ENCODE measurements at regions of chr20 and their contacts with region 1.

Region 1: GRCh38 chr20:52972190-52972937 is at the start of gene TSHZ2:
- DNase-seq: peak; percentile 81
- H3K4me3 ChIP-seq: peak within 1 kb of the TSS; percentile 82 to 92 (median 85)
- H3K27ac ChIP-seq: peak within 1 kb of the TSS; percentile 83
- H3K4me1 ChIP-seq: peaks cover 17% of the 10 kb centered on the region
- H3K27me3 ChIP-seq: no peaks in the 10 kb centered on the region
- CTCF ChIP-seq: no peak
- total RNA-seq, gene TSHZ2: 10.0 to 11.5 TPM

Region 2: GRCh38 chr20:52783769-52784168 is 188.6 kb before region 1 on chr20:
- CTCF ChIA-PET with region 1: no interaction called
- dilution Hi-C with region 1: no loop called
- in situ Hi-C with region 1: no loop called
- intact Hi-C with region 1: loop called (anchors 2 kb)
- DNase-seq: peak; percentile 15
- H3K4me3 ChIP-seq: no peak overlapping the region
- H3K27ac ChIP-seq: no peak overlapping the region
- H3K4me1 ChIP-seq: no peaks in the 10 kb centered on the region
- H3K27me3 ChIP-seq: peaks cover 2% of the 10 kb centered on the region
- CTCF ChIP-seq: peak; percentile 37 to 55

Region 3: GRCh38 chr20:52889225-52889624 is 83.1 kb before region 1 on chr20:
- CTCF ChIA-PET with region 1: no interaction called
- dilution Hi-C with region 1: loop called (anchors 25 kb)
- in situ Hi-C with region 1: no loop called
- intact Hi-C with region 1: loop called (anchors 2 kb)
- DNase-seq: peak; percentile 89
- H3K4me3 ChIP-seq: no peak overlapping the region
- H3K27ac ChIP-seq: peak overlapping the region; percentile 11
- H3K4me1 ChIP-seq: peaks cover 15% of the 10 kb centered on the region
- H3K27me3 ChIP-seq: no peaks in the 10 kb centered on the region
- CTCF ChIP-seq: no peak

Region 4: GRCh38 chr20:53004267-53004813 is 32.0 kb after region 1 on chr20:
- CTCF ChIA-PET with region 1: no interaction called
- dilution Hi-C with region 1: no loop called
- in situ Hi-C with region 1: no loop called
- intact Hi-C with region 1: no loop called
- DNase-seq: no peak
- H3K4me3 ChIP-seq: no peak overlapping the region
- H3K27ac ChIP-seq: no peak overlapping the region
- H3K4me1 ChIP-seq: peaks cover 17% of the 10 kb centered on the region
- H3K27me3 ChIP-seq: no peaks in the 10 kb centered on the region
- CTCF ChIP-seq: no peak

Region 5: DNA sequence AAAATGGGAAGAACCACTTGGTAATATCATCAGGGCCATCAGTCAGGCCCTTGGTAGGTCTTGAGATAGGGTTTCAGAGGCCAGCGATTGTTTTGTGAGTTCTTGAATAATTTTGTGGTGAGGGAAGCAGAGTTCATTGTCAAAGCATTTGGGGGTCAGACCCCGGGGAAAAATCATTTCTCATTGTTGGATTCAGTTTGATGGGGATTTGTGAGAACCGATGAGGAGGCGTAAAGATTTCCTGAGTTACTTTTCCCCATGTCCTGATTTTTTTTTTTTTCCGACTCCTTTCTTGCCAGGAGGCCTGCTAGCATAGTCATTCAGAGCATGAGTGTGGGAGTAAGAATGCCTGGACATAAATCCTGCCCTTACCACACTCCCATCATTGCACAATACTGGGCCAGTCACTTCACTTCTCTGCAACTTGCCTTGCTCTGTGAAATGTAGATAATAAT is 60.1 kb after region 1 on chr20:
- CTCF ChIA-PET with region 1: no interaction called
- dilution Hi-C with region 1: no loop called
- in situ Hi-C with region 1: no loop called
- intact Hi-C with region 1: loop called (anchors 2 kb)
- DNase-seq: peak; percentile 87
- H3K4me3 ChIP-seq: no peak overlapping the region
- H3K27ac ChIP-seq: peak overlapping the region; percentile 40
- H3K4me1 ChIP-seq: peaks cover 27% of the 10 kb centered on the region
- H3K27me3 ChIP-seq: no peaks in the 10 kb centered on the region
- CTCF ChIP-seq: no peak

Region 6: GRCh38 chr20:53050338-53050737 is 78.0 kb after region 1 on chr20:
- CTCF ChIA-PET with region 1: no interaction called
- dilution Hi-C with region 1: no loop called
- in situ Hi-C with region 1: no loop called
- intact Hi-C with region 1: no loop called
- DNase-seq: peak; percentile 78
- H3K4me3 ChIP-seq: no peak overlapping the region
- H3K27ac ChIP-seq: no peak overlapping the region
- H3K4me1 ChIP-seq: no peaks in the 10 kb centered on the region
- H3K27me3 ChIP-seq: no peaks in the 10 kb centered on the region
- CTCF ChIP-seq: no peak

Region 7: GRCh38 chr20:53157443-53158408 is 185.4 kb after region 1 on chr20:
- CTCF ChIA-PET with region 1: no interaction called
- dilution Hi-C with region 1: no loop called
- in situ Hi-C with region 1: loop called in 1 of 2 experiments (anchors 10 kb)
- intact Hi-C with region 1: loop called (anchors 5 kb)
- DNase-seq: peak; percentile 18
- H3K4me3 ChIP-seq: no peak overlapping the region
- H3K27ac ChIP-seq: no peak overlapping the region
- H3K4me1 ChIP-seq: no peaks in the 10 kb centered on the region
- H3K27me3 ChIP-seq: no peaks in the 10 kb centered on the region
- CTCF ChIP-seq: peak; percentile 48 to 66